Tibial artery (tissue), 4 donors: ENCODE measurements at regions of chr2 and their contacts with region 1.

Region 1: DNA sequence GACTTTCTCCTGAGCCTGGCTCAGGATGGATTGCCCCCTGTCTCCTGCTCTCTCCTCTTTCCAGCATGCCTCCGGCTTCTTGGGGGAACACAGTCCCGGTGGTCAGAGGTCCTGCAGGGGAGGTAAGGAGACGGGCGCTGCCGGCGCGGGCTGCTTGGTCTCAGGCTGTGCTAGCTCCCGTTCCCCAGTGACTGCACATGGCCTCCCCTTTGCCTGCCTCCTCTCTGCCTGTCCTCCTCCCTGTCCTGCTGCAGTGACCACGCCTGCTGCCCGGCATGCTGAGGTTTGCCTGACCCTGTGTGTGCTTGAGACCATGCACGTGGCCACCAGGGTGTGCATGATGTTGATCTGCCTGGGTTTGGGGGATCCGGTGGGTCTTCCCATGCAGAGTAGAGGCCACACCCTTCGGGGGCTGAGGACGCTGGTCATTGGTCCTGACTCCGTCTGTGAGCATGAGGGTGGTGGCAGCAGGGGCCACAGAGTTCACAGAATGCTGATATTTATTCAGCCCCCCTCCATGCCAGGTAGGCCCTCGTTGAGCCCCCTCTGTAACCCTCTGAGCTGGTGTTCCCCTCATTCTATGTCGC is 42.9 kb upstream of the MCFD2 start:
- DNase-seq: no peak
- H3K4me3 ChIP-seq: no peak overlapping the region
- H3K27ac ChIP-seq: no peak overlapping the region
- H3K4me1 ChIP-seq: peaks cover 0 to 50% (median 29%) of the 10 kb centered on the region in 4 donors
- H3K27me3 ChIP-seq: no peaks in the 10 kb centered on the region
- CTCF ChIP-seq: no peak

Region 2: GRCh38 chr2:46947841-46948335 is 10.6 kb before region 1 on chr2:
- intact Hi-C with region 1: loop called (anchors 1 kb)
- DNase-seq: no peak
- H3K4me3 ChIP-seq: no peak overlapping the region
- H3K27ac ChIP-seq: no peak overlapping the region
- H3K4me1 ChIP-seq: peaks cover 0 to 70% (median 27%) of the 10 kb centered on the region in 4 donors
- H3K27me3 ChIP-seq: no peaks in the 10 kb centered on the region
- CTCF ChIP-seq: no peak